ENCODE measurements at regions of chr2 and their contacts with region 1.

Region 1: DNA sequence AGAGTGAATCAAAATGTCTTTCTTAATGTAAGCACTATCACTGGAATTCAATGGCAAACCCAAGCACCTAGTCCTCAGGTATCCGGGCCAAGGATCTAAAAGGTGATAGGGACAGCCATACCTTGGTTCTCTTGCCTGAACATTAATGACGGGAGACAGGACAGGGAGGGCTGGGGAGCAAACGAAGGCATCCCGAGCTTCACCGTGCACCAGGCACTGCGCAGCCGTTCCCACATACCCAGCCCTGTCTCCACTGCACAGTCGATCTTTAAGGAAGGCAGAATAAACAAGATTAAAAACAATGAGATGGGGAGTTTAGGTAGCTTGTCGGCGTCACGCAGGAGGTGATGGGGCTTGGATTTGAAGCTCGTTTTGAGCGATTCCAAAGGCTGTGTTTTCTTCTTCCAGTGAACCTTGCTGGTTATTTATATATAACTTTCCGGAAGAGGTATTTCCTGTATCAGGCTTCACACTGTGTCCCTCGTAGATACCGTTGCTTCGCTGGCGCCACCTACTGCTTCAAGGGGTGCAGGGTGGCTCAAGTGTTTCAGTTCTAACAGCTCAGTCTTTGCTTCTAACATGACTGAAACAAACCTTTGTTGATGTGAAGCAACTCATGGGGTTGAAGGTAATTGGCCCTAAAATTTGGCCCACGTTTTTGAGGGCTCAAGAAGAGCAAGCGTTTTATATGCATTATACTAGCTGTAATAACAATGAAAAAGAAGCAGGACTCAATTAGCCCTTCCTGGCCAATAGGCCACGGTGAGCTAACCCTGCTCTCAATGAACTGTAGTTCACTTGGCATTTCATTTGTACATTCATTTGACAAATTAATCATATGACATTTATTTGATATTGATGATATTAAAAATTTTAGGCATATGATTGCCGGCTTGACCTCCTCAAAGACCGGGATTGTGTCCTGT is 77.4 kb downstream of the DCDC2C start:
- DNase-seq: no peak
- ATAC-seq: no peak
- H3K4me3 ChIP-seq: peak overlapping the region in 2 of 4 donors; percentile 11 to 25
- H3K27ac ChIP-seq: no peak overlapping the region
- H3K4me1 ChIP-seq: no peaks in the 10 kb centered on the region
- H3K27me3 ChIP-seq: peaks cover 0 to 3% (median 0%) of the 10 kb centered on the region in 3 donors
- CTCF ChIP-seq: peak in 3 of 5 experiments; percentile 22 to 51 (median 41)
- POLR2A ChIP-seq: no peak

Region 2: GRCh38 chr2:3728104-3729054 is 52.4 kb before region 1 on chr2:
- in situ Hi-C with region 1: no loop called
- intact Hi-C with region 1: loop called (anchors 2 kb)
- DNase-seq: no peak
- ATAC-seq: no peak
- H3K4me3 ChIP-seq: no peak overlapping the region
- H3K27ac ChIP-seq: no peak overlapping the region
- H3K4me1 ChIP-seq: no peaks in the 10 kb centered on the region
- H3K27me3 ChIP-seq: no peaks in the 10 kb centered on the region
- CTCF ChIP-seq: peak in 4 of 5 experiments; percentile 16 to 44 (median 24)
- POLR2A ChIP-seq: no peak

Region 3: DNA sequence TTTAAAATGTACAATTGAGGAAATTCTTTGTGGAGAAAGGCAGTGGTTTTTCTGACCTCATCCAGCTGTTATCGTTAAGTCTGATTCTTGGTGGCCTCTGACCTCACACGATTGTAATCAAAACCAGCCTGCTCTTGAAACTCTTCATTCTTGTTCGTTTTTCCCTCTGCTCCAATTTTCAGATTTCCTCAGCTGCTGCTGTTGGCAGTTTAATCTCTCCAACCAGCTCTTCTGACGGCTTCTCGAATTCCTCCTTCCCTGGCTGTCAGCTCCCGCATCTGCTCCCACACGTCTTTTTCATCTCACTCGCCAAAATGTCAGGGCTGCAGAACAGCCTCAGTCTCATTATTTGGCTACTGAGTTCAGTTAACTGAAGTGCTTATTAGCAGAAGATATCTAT is 58.7 kb after region 1 on chr2:
- in situ Hi-C with region 1: no loop called
- intact Hi-C with region 1: no loop called
- DNase-seq: no peak
- ATAC-seq: no peak
- H3K4me3 ChIP-seq: no peak overlapping the region
- H3K27ac ChIP-seq: no peak overlapping the region
- H3K4me1 ChIP-seq: no peaks in the 10 kb centered on the region
- H3K27me3 ChIP-seq: no peaks in the 10 kb centered on the region
- CTCF ChIP-seq: no peak
- POLR2A ChIP-seq: no peak

Measured in gastrocnemius medialis (tissue), 4 donors.